Activated naive CD4-positive, alpha-beta T cell treated with anti-CD3 and anti-CD28 coated beads for 36 hours (primary cell): ENCODE measurements at regions of chr12 and their contacts with region 1.

Region 1: DNA sequence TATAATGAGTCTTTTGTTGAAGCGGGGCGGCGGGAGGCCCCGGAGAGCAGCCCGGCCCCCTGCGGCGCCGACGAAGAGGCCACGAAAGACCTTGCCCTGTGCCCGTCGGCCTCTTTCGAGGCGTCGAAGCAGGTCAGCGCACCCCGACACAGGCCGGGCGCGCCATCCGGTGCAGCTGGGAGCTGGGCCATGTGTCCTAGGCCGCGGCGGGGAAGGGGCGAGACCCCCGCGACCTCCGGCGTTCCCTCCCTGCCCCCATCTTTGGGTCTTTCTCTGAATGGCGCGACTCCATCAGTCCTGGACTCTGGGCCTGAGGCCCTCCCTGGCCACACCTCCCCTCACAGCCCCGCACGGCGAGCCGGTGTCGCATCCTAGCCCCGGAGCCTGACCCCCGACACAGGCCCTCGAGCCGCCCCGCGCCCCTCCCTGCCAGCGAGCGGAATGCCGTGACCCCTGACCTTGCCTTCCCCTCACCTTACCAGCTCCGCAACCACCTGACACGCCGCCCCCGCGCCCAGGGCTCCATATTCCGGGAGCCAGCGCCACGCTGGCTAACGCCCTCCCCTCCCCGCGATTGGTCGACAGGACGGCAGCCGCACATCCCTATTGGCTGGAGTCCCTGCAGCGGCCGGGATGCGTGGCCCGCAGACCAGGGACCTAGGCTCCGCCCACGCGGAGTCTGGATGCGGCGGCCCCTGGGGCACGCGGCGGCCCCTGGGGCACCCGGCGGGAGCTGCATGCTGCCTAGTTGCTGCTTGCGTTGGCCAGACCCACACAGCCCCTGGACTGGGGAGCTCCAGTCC is at the start of gene SLC11A2:
- DNase-seq: peak; percentile 96
- H3K4me3 Mint-ChIP-seq: peak within 1 kb of the TSS; percentile 85
- H3K27ac Mint-ChIP-seq: peak within 1 kb of the TSS; percentile 93
- H3K4me1 Mint-ChIP-seq: peaks cover 54% of the 10 kb centered on the region
- H3K27me3 Mint-ChIP-seq: no peaks in the 10 kb centered on the region
- total RNA-seq, gene SLC11A2: 18.6 to 27.0 TPM

Region 2: DNA sequence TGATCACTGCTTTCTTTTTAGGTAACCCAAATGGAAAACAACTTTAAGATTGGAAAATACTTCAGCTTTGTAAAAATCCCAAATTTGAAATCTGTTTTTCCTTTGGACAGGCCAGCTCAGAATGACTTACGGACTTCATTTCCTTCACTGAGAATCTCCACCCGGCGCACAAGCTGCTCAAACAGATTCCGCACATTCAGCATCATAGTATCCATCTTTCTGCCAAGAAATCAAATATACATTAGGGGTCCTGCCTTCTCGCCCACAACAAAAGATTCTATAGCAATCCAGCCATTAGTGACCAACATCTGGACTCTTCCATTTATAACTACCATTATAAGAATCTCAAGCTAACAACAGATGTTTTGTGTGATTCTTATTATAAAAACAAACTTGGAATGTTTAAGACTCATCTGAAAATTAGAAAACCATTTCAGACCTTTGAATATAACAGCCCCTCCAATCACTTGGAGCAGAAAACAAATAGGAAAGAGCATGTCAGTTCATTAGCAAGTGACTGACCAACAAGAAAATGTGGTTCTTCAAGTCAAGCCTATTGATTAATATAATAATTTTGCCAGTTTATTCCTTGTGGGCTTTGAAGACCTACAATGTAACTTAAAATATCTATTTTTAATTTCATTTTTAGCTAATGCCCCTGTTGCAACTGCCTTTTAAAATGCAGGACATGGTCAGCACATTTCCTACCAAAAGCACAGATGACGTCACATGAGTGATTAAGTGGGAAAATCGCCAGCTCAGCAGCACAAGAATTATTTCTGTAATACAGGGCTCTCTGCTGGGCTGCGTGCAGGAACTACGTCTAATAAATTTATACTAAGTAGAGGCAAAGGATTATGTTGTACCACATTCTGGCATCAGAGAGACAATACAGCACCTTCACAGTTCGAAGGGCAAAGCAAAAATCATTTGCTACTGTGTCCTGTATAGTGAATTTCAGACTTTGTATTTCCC is 1009.2 kb before region 1 on chr12:
- CTCF ChIA-PET with region 1: no interaction called
- intact Hi-C with region 1: no loop called
- DNase-seq: no peak
- H3K4me3 Mint-ChIP-seq: no peak overlapping the region
- H3K27ac Mint-ChIP-seq: no peak overlapping the region
- H3K4me1 Mint-ChIP-seq: peaks cover 2% of the 10 kb centered on the region
- H3K27me3 Mint-ChIP-seq: no peaks in the 10 kb centered on the region

Region 3: DNA sequence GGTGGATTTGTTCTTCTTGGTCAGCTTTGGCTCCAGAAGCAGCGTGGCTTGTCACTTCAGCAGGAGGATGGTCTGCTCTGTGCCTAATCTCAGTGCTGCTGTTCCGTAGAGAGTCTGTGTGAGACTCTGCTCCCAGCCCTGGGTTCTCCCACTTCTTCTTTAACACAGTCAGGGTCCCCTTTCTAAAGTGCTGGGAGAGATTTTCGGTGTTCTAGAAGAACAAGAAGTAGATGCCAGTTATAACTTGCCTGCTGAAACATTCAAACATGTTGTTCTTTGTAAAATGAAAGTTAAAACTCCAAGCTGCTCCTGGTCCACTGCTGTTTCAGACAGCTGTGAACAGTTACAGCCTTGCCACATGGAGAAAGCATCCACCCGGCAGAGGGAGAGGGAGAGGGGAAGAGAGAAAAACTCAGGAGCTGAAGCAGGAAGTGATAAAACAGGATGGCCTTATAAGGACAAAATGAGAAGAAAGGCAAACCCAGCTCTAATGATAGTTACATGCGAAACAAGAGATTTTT is 803.7 kb before region 1 on chr12:
- CTCF ChIA-PET with region 1: no interaction called
- intact Hi-C with region 1: loop called (anchors 5 kb)
- DNase-seq: peak; percentile 32
- H3K4me3 Mint-ChIP-seq: no peak overlapping the region
- H3K27ac Mint-ChIP-seq: no peak overlapping the region
- H3K4me1 Mint-ChIP-seq: peaks cover 36% of the 10 kb centered on the region
- H3K27me3 Mint-ChIP-seq: no peaks in the 10 kb centered on the region

Region 4: GRCh38 chr12:50597200-50598195 is 428.5 kb before region 1 on chr12:
- CTCF ChIA-PET with region 1: no interaction called
- intact Hi-C with region 1: loop called (anchors 2 kb)
- DNase-seq: peak; percentile 85
- H3K4me3 Mint-ChIP-seq: peak overlapping the region; percentile 57
- H3K27ac Mint-ChIP-seq: peak overlapping the region; percentile 95
- H3K4me1 Mint-ChIP-seq: peaks cover 49% of the 10 kb centered on the region
- H3K27me3 Mint-ChIP-seq: no peaks in the 10 kb centered on the region

Region 5: DNA sequence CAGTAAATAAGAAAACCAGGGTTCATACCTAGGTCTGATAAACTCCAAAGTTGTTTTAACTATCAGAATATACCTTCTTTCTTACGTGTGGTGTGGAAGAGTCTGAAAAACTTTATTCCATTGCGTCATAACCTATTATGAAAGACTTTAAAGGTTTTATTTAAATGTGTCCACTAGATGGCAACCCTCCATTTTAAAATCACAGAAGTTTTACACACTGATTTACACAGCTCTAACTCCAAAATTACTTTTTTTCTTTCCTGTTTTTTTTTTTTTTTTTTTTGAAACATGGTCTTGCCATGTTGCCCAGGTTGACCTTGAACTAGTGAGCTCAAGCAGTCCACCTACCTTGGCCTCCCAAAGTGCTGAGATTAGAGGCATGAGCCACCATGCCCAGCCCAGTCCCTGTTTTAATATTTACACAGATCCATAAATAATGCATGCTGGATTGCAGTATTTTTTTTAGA is 200.6 kb before region 1 on chr12:
- CTCF ChIA-PET with region 1: interaction called, 56 read pairs
- intact Hi-C with region 1: loop called (anchors 1 kb)
- DNase-seq: no peak
- H3K4me3 Mint-ChIP-seq: no peak overlapping the region
- H3K27ac Mint-ChIP-seq: peak overlapping the region; percentile 52
- H3K4me1 Mint-ChIP-seq: peaks cover 10% of the 10 kb centered on the region
- H3K27me3 Mint-ChIP-seq: no peaks in the 10 kb centered on the region

Region 6: DNA sequence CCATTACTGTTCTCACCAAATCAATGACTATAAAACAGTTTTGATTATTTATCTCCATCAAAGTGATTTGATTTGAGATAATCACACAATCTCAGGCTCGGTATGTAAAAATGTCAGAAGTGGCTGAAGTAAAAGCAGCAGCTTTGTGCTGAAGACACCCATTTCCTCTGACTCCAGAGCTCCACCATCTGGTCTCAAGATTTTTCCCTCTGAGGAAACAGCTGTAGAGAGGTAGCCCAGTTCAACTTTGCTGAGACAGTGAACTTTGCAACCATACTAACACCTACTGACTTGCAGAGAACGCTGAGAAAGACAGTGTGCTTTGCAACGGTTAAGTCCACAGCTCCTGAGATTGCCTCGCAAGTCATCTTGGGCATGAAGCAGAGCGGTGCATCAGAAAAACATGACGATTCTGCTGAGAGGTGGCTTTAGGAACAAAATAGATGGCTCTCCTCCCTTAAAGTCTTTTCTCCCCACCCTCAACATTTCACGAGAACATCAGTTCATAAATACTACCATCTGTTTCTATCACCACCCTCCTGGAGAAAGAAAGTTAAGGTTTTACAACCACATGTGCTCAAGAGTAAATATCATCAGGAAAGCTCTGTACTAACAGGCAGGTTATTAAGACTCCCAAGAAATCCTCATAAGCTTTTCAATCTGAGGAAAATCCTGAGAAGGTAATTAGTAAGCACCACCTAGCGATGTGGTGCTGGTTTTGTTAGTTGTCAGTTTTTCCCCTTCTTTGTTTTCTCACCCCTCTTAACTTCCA is 38.9 kb before region 1 on chr12:
- CTCF ChIA-PET with region 1: interaction called, 33 read pairs
- intact Hi-C with region 1: loop called (anchors 1 kb)
- DNase-seq: peak; percentile 64
- H3K4me3 Mint-ChIP-seq: no peak overlapping the region
- H3K27ac Mint-ChIP-seq: no peak overlapping the region
- H3K4me1 Mint-ChIP-seq: peaks cover 56% of the 10 kb centered on the region
- H3K27me3 Mint-ChIP-seq: no peaks in the 10 kb centered on the region

Region 7: DNA sequence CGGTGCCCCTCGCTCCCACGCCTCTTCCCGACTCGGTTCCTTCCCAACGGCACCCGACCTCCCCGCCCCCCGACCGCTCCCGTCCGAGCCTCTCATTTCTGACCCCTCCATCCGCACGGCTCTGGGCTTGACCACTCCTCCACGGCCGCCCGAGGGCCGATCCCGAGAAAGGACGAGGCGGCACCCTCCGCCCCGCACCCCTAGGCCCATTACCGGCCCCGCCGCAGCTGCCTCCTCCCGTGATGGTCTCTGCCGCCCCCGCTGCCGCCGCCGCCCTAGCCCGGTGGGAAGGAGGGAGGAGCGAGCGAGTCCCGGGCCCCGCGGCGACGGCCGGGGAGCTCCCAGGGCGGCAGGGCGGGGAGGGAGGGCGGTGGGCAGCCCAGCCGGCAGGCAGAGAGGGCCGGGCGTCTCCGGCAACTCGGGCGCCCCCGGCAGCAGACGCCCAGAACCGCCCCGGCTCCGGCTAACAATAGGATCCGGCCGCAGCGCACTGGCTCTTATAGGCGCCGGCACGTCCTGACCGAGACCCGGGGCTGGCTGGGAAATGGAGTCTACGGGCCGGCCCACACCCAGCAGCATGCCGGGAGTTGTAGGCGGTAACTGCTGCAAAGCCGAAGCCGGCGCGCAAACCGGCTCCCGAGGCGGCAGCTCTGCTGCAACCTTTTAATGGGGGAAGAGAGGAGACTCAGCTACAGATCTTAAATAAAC is 57.2 kb after region 1 on chr12 and contains the start of gene CSRNP2:
- CTCF ChIA-PET with region 1: no interaction called
- intact Hi-C with region 1: loop called (anchors 1 kb)
- DNase-seq: peak; percentile 96
- H3K4me3 Mint-ChIP-seq: peak within 1 kb of the TSS; percentile 94
- H3K27ac Mint-ChIP-seq: peak within 1 kb of the TSS; percentile 70
- H3K4me1 Mint-ChIP-seq: peaks cover 35% of the 10 kb centered on the region
- H3K27me3 Mint-ChIP-seq: no peaks in the 10 kb centered on the region
- total RNA-seq, gene CSRNP2: 8.4 to 11.0 TPM

Region 8: DNA sequence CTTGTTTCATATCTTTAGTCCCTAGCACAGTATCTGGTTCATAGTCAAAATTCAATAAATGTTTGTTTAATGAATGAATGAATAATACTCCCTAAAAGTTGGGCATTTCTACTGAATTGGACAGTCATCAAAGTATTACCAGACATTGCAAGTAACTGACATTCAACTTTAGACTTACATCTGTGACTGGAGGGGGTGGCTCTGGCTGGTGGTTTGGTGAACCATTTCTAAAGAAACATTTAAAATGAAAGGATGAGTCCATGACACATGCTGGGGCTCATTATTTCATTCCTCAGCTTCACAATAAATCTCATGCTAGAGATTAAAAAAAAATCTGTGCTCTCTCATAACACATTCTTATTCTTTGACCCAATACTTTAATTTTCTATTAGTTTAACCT is 77.9 kb after region 1 on chr12:
- CTCF ChIA-PET with region 1: no interaction called
- intact Hi-C with region 1: no loop called
- DNase-seq: no peak
- H3K4me3 Mint-ChIP-seq: no peak overlapping the region
- H3K27ac Mint-ChIP-seq: no peak overlapping the region
- H3K4me1 Mint-ChIP-seq: no peaks in the 10 kb centered on the region
- H3K27me3 Mint-ChIP-seq: no peaks in the 10 kb centered on the region

Region 9: GRCh38 chr12:51601241-51601640 is 575.2 kb after region 1 on chr12:
- CTCF ChIA-PET with region 1: no interaction called
- intact Hi-C with region 1: no loop called
- DNase-seq: no peak
- H3K4me3 Mint-ChIP-seq: no peak overlapping the region
- H3K27ac Mint-ChIP-seq: no peak overlapping the region
- H3K4me1 Mint-ChIP-seq: no peaks in the 10 kb centered on the region
- H3K27me3 Mint-ChIP-seq: peaks cover 18% of the 10 kb centered on the region